Lower lobe of right lung (tissue), 2 donors: ENCODE measurements at regions of chr2 and their contacts with region 1.

Region 1: GRCh38 chr2:105114551-105114950 is 76.7 kb downstream of the MRPS9 start:
- DNase-seq: no peak
- ATAC-seq: peak in 1 of 2 donors; percentile 62
- H3K4me3 ChIP-seq: no peak overlapping the region
- H3K27ac ChIP-seq: no peak overlapping the region
- H3K4me1 ChIP-seq: no peaks in the 10 kb centered on the region
- H3K27me3 ChIP-seq: no peaks in the 10 kb centered on the region
- CTCF ChIP-seq: peak; percentile 73

Region 2: DNA sequence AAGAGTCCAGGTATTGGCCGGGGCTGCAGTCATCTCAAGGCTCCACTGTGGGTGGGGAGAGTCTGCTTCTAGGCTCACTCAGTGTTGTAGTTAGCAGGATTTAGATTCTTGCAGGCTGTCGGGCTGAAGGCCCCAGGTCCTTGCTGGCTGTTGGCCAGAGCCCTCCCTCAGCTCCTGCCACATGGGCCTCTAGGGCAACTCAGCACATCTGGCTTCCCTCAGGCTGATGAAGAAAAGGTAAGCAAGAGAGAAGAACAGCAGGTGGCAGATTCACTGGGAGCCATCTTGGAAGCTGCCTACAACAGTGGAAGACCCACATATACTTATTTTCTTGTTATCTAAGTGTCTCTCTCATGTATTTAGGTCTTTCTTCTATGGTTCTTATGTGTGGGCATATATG is 72.4 kb before region 1 on chr2:
- intact Hi-C with region 1: no loop called
- DNase-seq: no peak
- ATAC-seq: no peak
- H3K4me3 ChIP-seq: no peak overlapping the region
- H3K27ac ChIP-seq: no peak overlapping the region
- H3K4me1 ChIP-seq: peaks cover 11% of the 10 kb centered on the region
- H3K27me3 ChIP-seq: no peaks in the 10 kb centered on the region
- CTCF ChIP-seq: no peak

Region 3: DNA sequence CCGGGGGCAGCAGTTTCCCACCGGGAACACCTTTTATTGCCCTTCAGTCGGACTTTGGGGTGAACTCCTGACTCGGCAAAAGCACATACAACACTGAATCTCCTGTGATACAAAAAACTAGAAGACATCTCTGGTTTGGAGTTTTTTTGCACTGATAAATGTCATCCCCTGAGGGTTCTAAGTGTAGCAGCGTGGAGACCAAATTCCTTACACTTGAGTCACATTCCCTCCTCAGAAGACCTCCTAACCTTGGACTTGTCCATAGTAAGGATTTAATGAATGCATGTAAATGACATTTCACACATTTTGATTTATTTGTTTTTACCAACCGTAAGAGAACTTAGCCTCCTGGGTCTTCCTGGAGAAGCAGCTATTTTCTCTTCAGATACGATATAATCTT is 73.0 kb after region 1 on chr2:
- intact Hi-C with region 1: no loop called
- DNase-seq: no peak
- ATAC-seq: no peak
- H3K4me3 ChIP-seq: no peak overlapping the region
- H3K27ac ChIP-seq: no peak overlapping the region
- H3K4me1 ChIP-seq: no peaks in the 10 kb centered on the region
- H3K27me3 ChIP-seq: no peaks in the 10 kb centered on the region
- CTCF ChIP-seq: no peak

Region 4: GRCh38 chr2:105235388-105236054 is 121.0 kb after region 1 on chr2:
- intact Hi-C with region 1: loop called (anchors 10 kb)
- DNase-seq: peak; percentile 82
- ATAC-seq: peak; percentile 58 to 63
- H3K4me3 ChIP-seq: no peak overlapping the region
- H3K27ac ChIP-seq: no peak overlapping the region
- H3K4me1 ChIP-seq: no peaks in the 10 kb centered on the region
- H3K27me3 ChIP-seq: peaks cover 5% of the 10 kb centered on the region
- CTCF ChIP-seq: peak; percentile 72